ENCODE measurements at regions of chr21 and their contacts with region 1.

Region 1: DNA sequence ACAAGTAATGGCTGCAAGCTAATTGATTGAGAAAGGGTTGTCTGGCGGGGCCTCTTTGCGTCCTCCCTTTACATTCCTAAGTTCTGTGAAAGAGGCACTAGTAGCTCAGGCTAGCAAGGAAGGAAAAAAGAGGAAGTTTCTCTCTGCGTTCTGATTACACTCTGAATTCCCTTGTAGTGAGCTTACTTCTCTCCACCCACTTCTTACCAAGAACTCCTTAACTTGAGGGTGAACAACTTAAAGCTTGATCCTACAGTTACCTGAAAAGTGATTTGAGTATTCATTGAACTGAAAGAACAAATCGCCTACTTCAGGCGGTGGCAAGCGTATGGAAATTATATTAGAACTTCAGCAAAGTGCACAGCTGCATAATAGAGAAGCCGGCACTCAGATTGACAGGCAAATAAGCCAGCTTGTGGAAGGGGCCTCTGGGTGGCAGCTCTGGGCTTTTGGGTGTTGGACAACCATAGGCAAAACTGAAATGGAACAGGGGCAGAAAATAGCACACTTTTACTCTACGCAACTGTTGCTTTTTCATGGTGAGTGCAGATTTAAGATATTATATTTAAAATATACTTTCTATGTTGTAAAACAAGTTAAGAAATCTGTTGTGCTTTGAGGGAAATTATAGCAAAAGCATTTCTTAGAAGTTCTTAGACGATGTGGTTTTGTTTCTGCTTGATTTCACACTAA is 464.5 kb downstream of the USP25 start:
- DNase-seq: peak; percentile 60
- H3K4me3 ChIP-seq: peak overlapping the region; percentile 60
- H3K27ac ChIP-seq: peak overlapping the region; percentile 84
- H3K27me3 ChIP-seq: no peaks in the 10 kb centered on the region
- CTCF ChIP-seq: peak; percentile 36

Region 2: GRCh38 chr21:15768045-15768601 is 426.1 kb before region 1 on chr21:
- CTCF ChIA-PET with region 1: no interaction called
- POLR2A ChIA-PET with region 1: no interaction called
- DNase-seq: no peak
- H3K4me3 ChIP-seq: no peak overlapping the region
- H3K27ac ChIP-seq: no peak overlapping the region
- H3K27me3 ChIP-seq: no peaks in the 10 kb centered on the region
- CTCF ChIP-seq: no peak

Region 3: DNA sequence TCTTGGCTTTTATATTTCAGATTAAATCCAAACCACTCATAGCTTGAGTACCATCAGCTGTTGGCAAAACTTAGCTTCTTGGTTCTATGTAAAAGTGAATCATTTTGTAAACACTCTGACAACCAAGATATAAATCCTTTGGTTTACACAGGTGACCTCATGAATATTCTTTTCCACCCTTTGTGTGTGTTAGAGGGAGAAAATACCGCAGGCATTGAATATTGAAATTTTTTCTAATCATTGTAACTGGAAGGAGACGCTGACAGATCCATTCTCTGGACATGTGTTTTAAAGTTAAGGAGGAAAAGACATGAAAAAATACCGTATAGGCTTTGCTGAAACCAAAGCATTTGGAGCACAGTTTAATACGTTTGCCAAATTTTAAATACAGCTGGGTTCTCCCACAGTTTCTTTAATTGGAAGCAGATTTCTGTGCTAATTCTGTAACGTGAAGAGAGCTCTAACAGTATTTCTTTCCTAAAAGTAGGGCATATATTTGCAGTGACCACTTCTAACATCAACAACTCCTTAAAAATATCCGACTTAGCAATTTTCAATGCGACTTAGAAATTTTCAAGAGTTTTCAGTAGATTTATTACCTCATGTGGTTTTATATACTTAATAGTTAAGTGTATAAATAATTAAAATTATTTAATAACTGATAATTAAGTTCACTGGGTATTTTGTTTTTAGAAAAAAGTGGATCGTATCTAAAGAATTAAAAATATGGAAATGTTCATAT is 76.2 kb before region 1 on chr21:
- CTCF ChIA-PET with region 1: no interaction called
- POLR2A ChIA-PET with region 1: interaction called, 10 read pairs
- DNase-seq: peak; percentile 71
- H3K4me3 ChIP-seq: no peak overlapping the region
- H3K27ac ChIP-seq: no peak overlapping the region
- H3K27me3 ChIP-seq: no peaks in the 10 kb centered on the region
- CTCF ChIP-seq: no peak

Region 4: DNA sequence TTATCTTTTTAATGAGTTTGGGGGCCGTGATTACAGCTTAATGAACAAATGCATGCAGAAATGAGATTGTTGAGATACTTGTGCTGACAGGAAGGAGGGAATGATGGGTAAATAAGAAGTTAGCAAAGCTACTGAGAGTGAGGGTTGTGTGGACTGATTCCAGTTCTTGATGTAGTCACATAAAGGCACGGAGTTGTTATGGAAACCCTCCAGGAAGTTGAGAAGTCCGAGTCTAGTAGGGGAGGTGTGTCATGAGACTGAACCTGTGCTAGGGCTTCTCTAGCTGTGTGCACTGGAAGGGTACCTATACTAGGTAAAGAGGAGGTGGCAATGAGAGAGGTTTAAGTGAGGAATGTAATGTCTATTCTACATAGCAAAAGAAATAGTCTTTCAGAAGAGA is 11.3 kb after region 1 on chr21:
- CTCF ChIA-PET with region 1: no interaction called
- POLR2A ChIA-PET with region 1: no interaction called
- DNase-seq: no peak
- H3K4me3 ChIP-seq: no peak overlapping the region
- H3K27ac ChIP-seq: no peak overlapping the region
- H3K27me3 ChIP-seq: no peaks in the 10 kb centered on the region
- CTCF ChIP-seq: no peak

Region 5: DNA sequence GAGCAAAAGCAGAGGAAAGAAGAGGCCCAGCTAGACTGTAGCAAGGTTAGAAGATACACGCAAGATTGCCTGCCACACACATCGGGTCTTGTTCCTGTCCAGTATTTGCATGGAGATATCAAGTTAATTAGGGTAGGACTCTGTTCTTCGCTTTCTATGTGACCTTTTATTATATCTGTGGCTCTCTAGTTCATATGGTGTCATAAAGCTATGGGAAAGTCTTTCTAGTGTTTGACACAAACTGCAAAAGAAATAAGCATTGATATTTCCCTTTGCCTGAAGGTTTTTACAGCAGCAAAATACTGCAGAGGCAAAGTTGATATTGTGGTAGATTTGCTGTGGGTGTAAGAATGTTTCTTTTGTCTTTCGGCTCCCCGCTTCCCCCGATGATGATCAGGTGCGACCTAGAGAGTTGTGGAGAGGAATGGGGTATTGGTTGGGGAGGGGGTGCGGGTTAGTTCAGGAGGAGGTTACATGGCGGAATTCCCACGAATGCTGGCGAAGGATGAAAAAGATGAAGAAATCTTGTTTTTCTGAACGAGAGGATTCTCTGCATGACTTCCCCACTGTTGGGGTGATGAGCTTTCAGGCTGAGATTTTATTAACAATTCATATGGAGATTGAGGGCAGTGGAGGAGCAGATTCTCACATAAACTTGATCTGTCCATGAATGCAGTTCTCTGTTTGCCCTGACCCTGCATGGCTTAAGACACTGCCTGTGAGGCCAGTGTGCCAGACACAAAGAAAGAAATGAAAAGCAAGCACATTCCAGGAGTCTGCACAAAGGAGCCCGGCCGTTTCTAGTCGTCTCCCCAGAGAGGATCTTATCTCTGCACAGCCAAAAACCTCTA is 85.7 kb after region 1 on chr21:
- CTCF ChIA-PET with region 1: interaction called, 3 read pairs
- POLR2A ChIA-PET with region 1: interaction called, 10 read pairs
- DNase-seq: peak; percentile 3
- H3K4me3 ChIP-seq: peak overlapping the region; percentile 34
- H3K27ac ChIP-seq: no peak overlapping the region
- H3K27me3 ChIP-seq: no peaks in the 10 kb centered on the region
- CTCF ChIP-seq: no peak

Region 6: GRCh38 chr21:16330082-16330907 is 136.1 kb after region 1 on chr21:
- CTCF ChIA-PET with region 1: interaction called, 10 read pairs
- POLR2A ChIA-PET with region 1: no interaction called
- DNase-seq: peak; percentile 44
- H3K4me3 ChIP-seq: no peak overlapping the region
- H3K27ac ChIP-seq: no peak overlapping the region
- H3K27me3 ChIP-seq: no peaks in the 10 kb centered on the region
- CTCF ChIP-seq: peak; percentile 76

Region 7: GRCh38 chr21:16742131-16742641 is 547.9 kb after region 1 on chr21:
- CTCF ChIA-PET with region 1: no interaction called
- POLR2A ChIA-PET with region 1: no interaction called
- DNase-seq: no peak
- H3K4me3 ChIP-seq: no peak overlapping the region
- H3K27ac ChIP-seq: no peak overlapping the region
- H3K27me3 ChIP-seq: no peaks in the 10 kb centered on the region
- CTCF ChIP-seq: no peak